CD4-positive, alpha-beta T cell (primary cell): ENCODE measurements at regions of chr17 and their contacts with region 1.

Region 1: GRCh38 chr17:2266045-2266864 is 37.3 kb downstream of the SMG6 start:
- DNase-seq: peak; percentile 55 to 96 (median 71)
- ATAC-seq: peak; percentile 80
- H3K4me3 ChIP-seq: peak overlapping the region; percentile 36
- H3K4me3 Mint-ChIP-seq: peak overlapping the region; percentile 67
- H3K27ac ChIP-seq: peak overlapping the region; percentile 83 to 84
- H3K27ac Mint-ChIP-seq: peak overlapping the region; percentile 98
- H3K4me1 ChIP-seq: peaks cover 87% of the 10 kb centered on the region
- H3K4me1 Mint-ChIP-seq: peaks cover 85% of the 10 kb centered on the region
- H3K27me3 ChIP-seq: no peaks in the 10 kb centered on the region
- H3K27me3 Mint-ChIP-seq: no peaks in the 10 kb centered on the region
- CTCF ChIP-seq: no peak

Region 2: GRCh38 chr17:2215616-2216364 is 50.5 kb before region 1 on chr17:
- CTCF ChIA-PET with region 1: no interaction called
- POLR2A ChIA-PET with region 1: interaction called, 10 read pairs
- intact Hi-C with region 1: no loop called
- DNase-seq: peak; percentile 54 to 88 (median 64)
- ATAC-seq: peak; percentile 93
- H3K4me3 ChIP-seq: peak overlapping the region; percentile 37
- H3K4me3 Mint-ChIP-seq: peak overlapping the region; percentile 68
- H3K27ac ChIP-seq: peak overlapping the region; percentile 81 to 83
- H3K27ac Mint-ChIP-seq: peak overlapping the region; percentile 95
- H3K4me1 ChIP-seq: peaks cover 44% of the 10 kb centered on the region
- H3K4me1 Mint-ChIP-seq: peaks cover 58% of the 10 kb centered on the region
- H3K27me3 ChIP-seq: no peaks in the 10 kb centered on the region
- H3K27me3 Mint-ChIP-seq: no peaks in the 10 kb centered on the region
- CTCF ChIP-seq: no peak

Region 3: GRCh38 chr17:2253768-2254406 is 12.4 kb before region 1 on chr17:
- CTCF ChIA-PET with region 1: interaction called, 4 read pairs
- POLR2A ChIA-PET with region 1: interaction called, 77 read pairs
- intact Hi-C with region 1: loop called in 1 of 2 experiments (anchors 1 kb)
- DNase-seq: peak in 2 of 14 experiments; percentile 27 to 58
- ATAC-seq: peak; percentile 62
- H3K4me3 ChIP-seq: no peak overlapping the region
- H3K4me3 Mint-ChIP-seq: peak overlapping the region; percentile 68
- H3K27ac ChIP-seq: no peak overlapping the region
- H3K27ac Mint-ChIP-seq: peak overlapping the region; percentile 85
- H3K4me1 ChIP-seq: peaks cover 41% of the 10 kb centered on the region
- H3K4me1 Mint-ChIP-seq: peaks cover 66% of the 10 kb centered on the region
- H3K27me3 ChIP-seq: no peaks in the 10 kb centered on the region
- H3K27me3 Mint-ChIP-seq: no peaks in the 10 kb centered on the region
- CTCF ChIP-seq: no peak

Region 4: GRCh38 chr17:2282297-2282873 is 16.1 kb after region 1 on chr17:
- CTCF ChIA-PET with region 1: interaction called, 5 read pairs
- POLR2A ChIA-PET with region 1: interaction called, 17 read pairs
- intact Hi-C with region 1: loop called (anchors 2 kb)
- DNase-seq: peak in 4 of 14 experiments; percentile 10 to 81 (median 76)
- ATAC-seq: peak; percentile 80
- H3K4me3 ChIP-seq: no peak overlapping the region
- H3K4me3 Mint-ChIP-seq: no peak overlapping the region
- H3K27ac ChIP-seq: no peak overlapping the region
- H3K27ac Mint-ChIP-seq: peak overlapping the region; percentile 58
- H3K4me1 ChIP-seq: peaks cover 14% of the 10 kb centered on the region
- H3K4me1 Mint-ChIP-seq: peaks cover 35% of the 10 kb centered on the region
- H3K27me3 ChIP-seq: no peaks in the 10 kb centered on the region
- H3K27me3 Mint-ChIP-seq: no peaks in the 10 kb centered on the region
- CTCF ChIP-seq: peak; percentile 78

Region 5: GRCh38 chr17:2295575-2295974 is 29.3 kb after region 1 on chr17:
- CTCF ChIA-PET with region 1: no interaction called
- POLR2A ChIA-PET with region 1: no interaction called
- intact Hi-C with region 1: no loop called
- DNase-seq: no peak
- ATAC-seq: no peak
- H3K4me3 ChIP-seq: no peak overlapping the region
- H3K4me3 Mint-ChIP-seq: no peak overlapping the region
- H3K27ac ChIP-seq: no peak overlapping the region
- H3K27ac Mint-ChIP-seq: no peak overlapping the region
- H3K4me1 ChIP-seq: peaks cover 6% of the 10 kb centered on the region
- H3K4me1 Mint-ChIP-seq: peaks cover 55% of the 10 kb centered on the region
- H3K27me3 ChIP-seq: no peaks in the 10 kb centered on the region
- H3K27me3 Mint-ChIP-seq: no peaks in the 10 kb centered on the region
- CTCF ChIP-seq: no peak